ENCODE measurements at regions of chr17 and their contacts with region 1.

Region 1: GRCh38 chr17:73429440-73430164 is 117.8 kb upstream of the CDC42EP4 start:
- DNase-seq: peak; percentile 4
- H3K4me3 ChIP-seq: no peak overlapping the region
- H3K27me3 ChIP-seq: no peaks in the 10 kb centered on the region
- CTCF ChIP-seq: peak; percentile 95

Region 2: DNA sequence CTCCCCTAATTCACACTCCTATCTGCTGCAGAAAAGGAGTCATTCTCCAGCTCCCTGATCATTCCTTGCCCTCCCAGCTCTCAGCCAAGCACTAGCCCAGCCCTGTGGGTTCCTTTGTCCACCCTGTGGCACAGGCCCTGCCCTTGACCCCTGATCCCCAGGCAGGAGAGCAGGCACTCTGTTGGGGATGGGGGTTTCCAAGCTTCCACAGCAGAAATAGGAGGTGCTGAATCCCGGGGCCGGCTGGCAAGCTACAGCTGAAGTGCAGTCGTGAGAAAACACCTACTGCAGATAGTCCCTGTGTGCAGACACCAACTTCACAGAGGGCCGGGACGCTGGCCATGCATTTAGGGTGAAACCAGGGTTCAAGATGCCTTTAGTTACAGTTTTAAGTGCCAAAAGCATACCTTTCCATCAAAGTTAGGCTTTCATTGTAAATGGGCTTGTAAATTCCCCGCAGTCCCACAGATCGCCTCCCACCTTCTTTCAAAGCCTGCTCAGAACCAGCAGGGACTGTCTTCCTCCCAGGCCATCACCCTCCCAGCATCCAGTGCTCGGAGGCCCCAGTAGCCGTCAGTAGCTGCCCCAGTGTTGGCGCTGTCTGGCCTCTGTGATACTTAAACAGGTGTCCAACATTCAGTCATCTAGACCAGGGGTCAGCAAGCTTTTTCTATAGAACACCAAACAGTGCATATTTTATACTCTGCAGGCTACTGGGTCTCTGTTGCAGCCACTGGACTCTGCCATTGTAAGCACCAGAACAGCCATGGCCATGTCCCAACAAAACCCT is 178.6 kb before region 1 on chr17:
- CTCF ChIA-PET with region 1: no interaction called
- POLR2A ChIA-PET with region 1: no interaction called
- DNase-seq: no peak
- H3K4me3 ChIP-seq: no peak overlapping the region
- H3K27me3 ChIP-seq: no peaks in the 10 kb centered on the region; the same call in 1 of the 2 replicates
- CTCF ChIP-seq: no peak

Region 3: DNA sequence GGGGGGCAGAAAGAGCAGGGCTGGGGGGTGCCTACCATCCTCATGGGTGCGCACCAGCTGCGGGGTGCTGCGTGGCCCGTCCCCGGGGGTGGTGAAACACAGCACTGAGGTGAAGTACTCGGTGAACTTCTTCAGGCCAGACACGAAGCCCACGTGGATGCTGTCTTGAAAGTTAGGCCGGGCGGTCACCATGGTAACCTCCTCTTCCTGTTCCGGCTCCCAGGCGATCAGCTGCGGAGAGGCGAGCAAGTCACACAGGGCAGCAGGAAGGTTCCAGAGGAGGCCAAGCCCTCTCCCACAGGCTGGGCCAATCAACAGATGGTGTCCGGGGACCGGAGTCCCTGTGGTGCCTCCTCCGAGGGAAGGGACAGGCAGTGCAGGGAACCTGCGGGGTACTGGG is 27.7 kb before region 1 on chr17:
- CTCF ChIA-PET with region 1: interaction called, 10 read pairs
- POLR2A ChIA-PET with region 1: no interaction called
- DNase-seq: no peak
- H3K4me3 ChIP-seq: no peak overlapping the region
- H3K27me3 ChIP-seq: no peaks in the 10 kb centered on the region; the same call in 1 of the 2 replicates
- CTCF ChIP-seq: no peak

Region 4: DNA sequence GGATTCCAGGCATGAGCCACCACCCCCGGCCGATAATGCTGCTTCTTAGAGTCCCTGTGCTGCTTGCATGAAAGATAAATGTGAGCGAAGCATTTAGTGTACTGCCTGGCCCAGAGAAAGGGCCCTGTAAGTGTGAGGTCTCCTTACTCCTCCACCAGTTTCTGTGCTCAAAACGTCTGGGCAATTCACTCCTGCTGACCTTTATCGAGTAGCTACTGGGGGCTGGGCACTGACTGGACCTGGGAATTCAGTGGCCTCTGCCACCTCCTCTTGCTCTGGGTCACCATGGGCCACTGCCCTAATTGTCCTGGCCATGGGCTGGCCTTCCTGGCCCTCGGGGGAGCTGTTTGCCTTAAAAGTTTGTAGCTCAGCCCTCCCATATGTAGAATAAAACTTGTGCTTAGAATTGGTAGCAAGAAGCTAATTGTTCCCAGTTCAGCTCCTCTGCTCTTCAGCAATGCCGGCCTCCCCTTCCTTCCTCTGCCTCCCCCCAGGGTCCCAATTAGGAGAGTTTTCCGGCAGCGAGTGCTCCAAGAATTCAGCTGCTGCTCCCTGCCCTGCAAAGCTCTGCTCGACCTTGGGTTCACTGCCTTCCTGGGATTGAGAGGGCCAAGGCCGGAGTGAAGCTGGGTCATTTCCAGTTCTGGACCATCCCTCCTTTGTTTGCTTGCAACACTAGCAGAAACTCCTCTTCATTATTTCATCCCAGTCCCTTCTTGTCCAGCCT is 18.9 kb before region 1 on chr17:
- CTCF ChIA-PET with region 1: interaction called, 14 read pairs
- POLR2A ChIA-PET with region 1: no interaction called
- DNase-seq: no peak
- H3K4me3 ChIP-seq: no peak overlapping the region
- H3K27me3 ChIP-seq: no peaks in the 10 kb centered on the region
- CTCF ChIP-seq: no peak

Region 5: DNA sequence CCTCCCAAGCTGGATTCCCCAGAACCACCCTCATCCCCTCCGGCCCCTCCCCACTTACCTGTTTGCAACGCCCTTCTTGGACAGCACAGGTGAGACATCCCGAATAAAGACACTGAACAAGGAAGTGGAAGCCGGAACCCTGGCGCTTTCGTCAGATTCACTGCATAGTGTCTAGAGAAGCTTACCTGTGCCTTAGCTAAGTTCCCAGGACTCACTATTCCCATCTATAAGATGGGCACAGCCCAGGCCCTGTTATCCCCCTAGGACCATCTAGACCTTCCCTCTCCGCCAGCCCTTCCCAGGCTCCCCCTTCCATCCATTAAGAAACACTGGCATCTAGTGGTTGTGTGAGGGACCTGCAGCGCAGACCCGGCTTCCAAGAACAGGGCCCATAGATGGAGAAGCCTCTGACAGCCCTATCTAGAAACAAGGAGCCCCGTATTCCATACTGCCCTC is 747.0 kb after region 1 on chr17:
- CTCF ChIA-PET with region 1: interaction called, 27 read pairs
- POLR2A ChIA-PET with region 1: no interaction called
- DNase-seq: no peak
- H3K4me3 ChIP-seq: no peak overlapping the region
- H3K27me3 ChIP-seq: no peaks in the 10 kb centered on the region; the same call in 1 of the 2 replicates
- CTCF ChIP-seq: peak; percentile 89

Region 6: DNA sequence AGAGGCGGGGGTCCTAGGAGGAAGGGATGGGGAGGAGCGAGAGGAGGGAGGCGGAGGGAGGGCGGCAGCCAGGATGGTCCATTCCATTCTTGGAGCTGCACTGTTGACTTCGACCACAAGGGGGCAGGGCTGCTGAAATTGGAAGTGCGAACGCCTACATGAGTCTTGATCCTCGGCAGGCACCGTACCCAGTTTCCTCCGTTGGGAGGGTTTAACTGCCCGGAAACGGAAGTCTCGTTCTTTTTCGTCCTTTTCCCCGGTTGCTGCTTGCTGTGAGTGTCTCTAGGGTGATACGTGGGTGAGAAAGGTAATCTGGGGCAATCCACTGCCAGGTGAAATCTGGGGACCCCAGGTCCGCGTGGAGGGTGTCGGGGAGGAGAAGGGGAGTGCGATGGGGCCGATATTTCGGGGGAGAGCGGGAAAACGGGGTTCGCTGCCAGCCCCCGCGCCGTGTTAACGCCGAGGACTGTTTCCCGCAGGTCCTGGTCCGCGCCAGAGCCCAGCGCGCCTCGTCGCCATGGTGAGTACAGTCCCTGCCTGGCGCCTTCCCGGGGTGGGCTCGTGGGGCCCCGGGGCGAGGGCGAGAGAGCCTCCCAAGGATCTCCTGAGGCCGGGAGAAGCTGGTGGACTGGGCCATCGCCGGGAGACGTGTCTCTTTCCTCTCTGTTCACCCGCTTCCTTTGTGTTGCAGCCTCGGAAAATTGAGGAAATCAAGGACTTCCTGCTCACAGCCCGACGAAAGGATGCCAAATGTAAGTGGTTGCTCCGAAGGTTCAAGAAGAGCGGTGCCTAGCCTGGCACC is 774.0 kb after region 1 on chr17 and contains the start of gene RPL38:
- CTCF ChIA-PET with region 1: interaction called, 25 read pairs
- POLR2A ChIA-PET with region 1: no interaction called
- DNase-seq: peak; percentile 82
- H3K4me3 ChIP-seq: peak within 1 kb of the TSS; percentile 89
- H3K27me3 ChIP-seq: peaks cover 10% of the 10 kb centered on the region
- CTCF ChIP-seq: peak; percentile 99
- polyA plus RNA-seq, gene RPL38: 1,841 and 2,079 TPM in 2 replicates

Measured in BJ (cell line).